ENCODE measurements at regions of chrX and their contacts with region 1.

Region 1: DNA sequence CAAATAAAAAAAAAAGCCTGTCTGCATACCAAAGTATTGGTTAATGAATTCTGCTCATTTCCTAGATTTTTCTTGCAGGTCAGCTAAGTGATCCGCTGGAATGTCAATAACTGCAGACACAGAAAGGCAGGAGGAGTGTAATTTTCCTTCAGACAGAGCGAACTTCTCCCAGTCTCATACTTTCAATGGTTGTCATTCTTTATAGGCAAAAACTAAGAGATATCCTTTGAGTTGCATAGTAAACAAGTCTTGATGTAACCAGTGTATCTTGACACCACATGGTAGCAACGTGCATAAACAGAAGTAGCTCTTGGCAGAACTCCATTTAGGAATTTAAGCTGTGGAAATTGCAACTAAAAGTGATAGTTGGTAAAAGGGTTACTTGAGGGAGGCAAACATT is 8.2 kb downstream of the CAPN6 start:
- DNase-seq: no peak
- ATAC-seq: no peak
- H3K4me3 ChIP-seq: no peak overlapping the region
- H3K4me1 ChIP-seq: no peaks in the 10 kb centered on the region
- CTCF ChIP-seq: no peak

Region 2: GRCh38 chrX:111114801-111115200 is 147.3 kb before region 1 on chrX:
- intact Hi-C with region 1: no loop called
- DNase-seq: no peak
- ATAC-seq: no peak
- H3K4me3 ChIP-seq: no peak overlapping the region
- H3K4me1 ChIP-seq: no peaks in the 10 kb centered on the region
- CTCF ChIP-seq: no peak

Region 3: GRCh38 chrX:111131573-111131972 is 130.5 kb before region 1 on chrX:
- intact Hi-C with region 1: no loop called
- DNase-seq: no peak
- ATAC-seq: no peak
- H3K4me3 ChIP-seq: no peak overlapping the region
- H3K4me1 ChIP-seq: no peaks in the 10 kb centered on the region
- CTCF ChIP-seq: no peak

Region 4: DNA sequence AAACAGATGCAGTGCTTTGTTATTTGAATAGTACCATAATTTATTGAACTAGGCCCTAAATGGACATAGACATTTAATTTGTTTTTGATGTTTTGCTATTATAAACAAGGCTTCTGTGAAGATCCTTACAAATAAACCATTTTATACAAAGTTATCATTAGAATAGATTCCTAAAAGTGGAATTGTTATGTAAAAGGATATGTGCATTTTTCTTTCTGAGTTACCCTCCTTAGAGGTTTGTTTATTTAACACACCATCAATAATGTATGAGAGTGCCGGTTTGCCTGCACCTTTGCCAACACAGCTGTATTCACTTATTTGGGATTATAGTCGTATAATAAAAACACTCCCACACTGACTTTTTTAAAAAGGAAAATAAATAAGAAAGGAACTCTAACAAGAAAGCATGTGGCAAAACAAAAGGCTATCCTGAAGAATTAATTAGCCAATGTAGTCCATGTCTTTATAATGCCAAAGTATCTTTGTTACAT is 81.3 kb before region 1 on chrX:
- intact Hi-C with region 1: no loop called
- DNase-seq: no peak
- ATAC-seq: no peak
- H3K4me3 ChIP-seq: no peak overlapping the region
- H3K4me1 ChIP-seq: no peaks in the 10 kb centered on the region
- CTCF ChIP-seq: no peak

Region 5: DNA sequence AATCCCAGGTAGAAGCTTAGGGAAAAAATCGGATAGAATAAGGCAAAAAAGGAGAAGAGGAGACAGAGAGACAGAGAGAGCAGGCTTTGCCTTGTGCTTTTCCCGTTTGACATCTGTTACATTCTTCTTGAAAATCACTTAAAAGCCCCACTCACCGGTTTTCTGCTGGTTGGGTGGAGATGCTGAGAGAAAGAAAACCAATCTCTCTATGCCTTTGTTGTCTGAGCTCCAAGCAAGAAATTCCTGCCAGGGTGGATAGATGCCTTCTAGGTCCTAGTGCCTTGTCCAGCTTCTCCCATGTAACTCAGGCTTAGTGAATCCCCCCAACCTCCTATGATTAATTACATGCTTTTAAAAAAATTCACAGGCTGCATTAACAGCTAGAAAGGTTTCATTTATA is 149.9 kb after region 1 on chrX and contains the start of gene DCX:
- intact Hi-C with region 1: no loop called
- DNase-seq: no peak
- ATAC-seq: no peak
- H3K4me3 ChIP-seq: no peak within 1 kb of the TSS
- H3K4me1 ChIP-seq: no peaks in the 10 kb centered on the region
- CTCF ChIP-seq: no peak
- total RNA-seq, gene DCX: 0.22 TPM in 1 of 3 donors, not detected in the others

Region 6: GRCh38 chrX:111445486-111445885 is 183.4 kb after region 1 on chrX:
- intact Hi-C with region 1: loop called in 1 of 2 experiments (anchors 10 kb)
- DNase-seq: no peak
- ATAC-seq: peak; percentile 25
- H3K4me3 ChIP-seq: no peak overlapping the region
- H3K4me1 ChIP-seq: no peaks in the 10 kb centered on the region
- CTCF ChIP-seq: no peak

Measured in mucosa of descending colon (tissue), 3 donors.